ENCODE measurements at regions of chr12 and their contacts with region 1.

Region 1: GRCh38 chr12:102484428-102484958 is 4.1 kb upstream of the IGF1 start:
- DNase-seq: peak; percentile 85

Region 2: DNA sequence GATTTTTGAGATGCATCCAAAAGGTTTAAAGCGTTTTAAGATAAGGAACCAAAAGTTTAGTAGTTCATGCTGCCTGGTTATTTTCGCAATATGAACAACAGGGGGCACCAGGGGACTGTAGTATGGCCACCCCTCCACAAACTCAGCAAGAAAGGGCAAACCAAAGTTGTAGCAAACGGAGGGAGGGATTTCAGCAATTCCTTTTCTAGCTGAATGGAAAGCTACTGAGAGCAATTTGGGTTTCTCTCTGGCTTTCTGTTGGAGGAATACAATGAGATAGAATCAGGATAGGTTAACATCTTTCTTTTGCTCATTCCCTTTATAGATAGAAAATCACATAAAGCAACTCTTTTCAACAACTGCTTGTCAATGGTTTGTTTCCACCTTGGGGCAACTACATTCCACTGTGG is 544.6 kb before region 1 on chr12:
- intact Hi-C with region 1: loop called in 1 of 2 experiments (anchors 10 kb)
- DNase-seq: no peak

Region 3: GRCh38 chr12:102824218-102824835 is 339.8 kb after region 1 on chr12:
- intact Hi-C with region 1: no loop called
- DNase-seq: peak; percentile 87

Measured in posterior vena cava (tissue), 2 donors.